PC-9 (cell line): ENCODE measurements at regions of chr2 and their contacts with region 1.

Region 1: DNA sequence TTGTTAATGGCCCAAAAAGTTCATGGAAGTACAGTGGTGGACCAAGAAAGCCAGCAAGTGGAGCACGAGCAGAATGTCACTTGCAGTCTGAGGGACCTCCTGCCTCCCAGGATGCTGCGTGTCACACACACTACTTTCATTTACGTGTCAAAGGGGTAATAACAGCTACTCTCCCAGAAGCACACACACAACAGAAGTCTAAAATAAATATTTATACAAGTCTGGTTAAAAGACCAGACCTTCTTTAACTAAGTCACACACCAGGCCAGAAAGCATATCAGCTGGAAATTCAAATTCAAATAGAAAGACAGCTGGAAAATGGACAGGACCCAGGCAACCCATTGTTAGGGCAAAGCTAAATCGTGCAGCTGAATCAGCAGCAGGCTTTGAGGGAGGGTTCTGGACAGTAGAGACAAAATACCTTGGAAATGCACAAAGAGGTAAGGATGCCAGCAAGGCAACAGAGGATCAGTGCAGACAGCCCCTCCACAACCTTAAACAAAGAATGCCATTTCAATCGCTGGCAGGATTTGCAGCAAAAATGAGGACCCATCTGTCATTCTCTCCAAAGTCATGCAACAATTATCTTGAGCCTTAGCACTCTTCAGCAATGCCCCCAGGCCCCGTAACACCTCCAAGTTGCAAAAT is 160.5 kb downstream of the TMEM163 start:
- DNase-seq: no peak
- H3K4me3 ChIP-seq: no peak overlapping the region
- H3K27ac ChIP-seq: no peak overlapping the region
- H3K4me1 ChIP-seq: no peaks in the 10 kb centered on the region
- H3K27me3 ChIP-seq: no peaks in the 10 kb centered on the region
- CTCF ChIP-seq: no peak

Region 2: GRCh38 chr2:134603966-134604365 is 45.6 kb after region 1 on chr2:
- CTCF ChIA-PET with region 1: no interaction called
- POLR2A ChIA-PET with region 1: interaction called, 13 read pairs
- intact Hi-C with region 1: no loop called
- DNase-seq: no peak
- H3K4me3 ChIP-seq: no peak overlapping the region
- H3K27ac ChIP-seq: no peak overlapping the region
- H3K4me1 ChIP-seq: no peaks in the 10 kb centered on the region
- H3K27me3 ChIP-seq: no peaks in the 10 kb centered on the region
- CTCF ChIP-seq: no peak